Common myeloid progenitor, CD34-positive (primary cell): ENCODE measurements at regions of chr17 and their contacts with region 1.

Region 1: DNA sequence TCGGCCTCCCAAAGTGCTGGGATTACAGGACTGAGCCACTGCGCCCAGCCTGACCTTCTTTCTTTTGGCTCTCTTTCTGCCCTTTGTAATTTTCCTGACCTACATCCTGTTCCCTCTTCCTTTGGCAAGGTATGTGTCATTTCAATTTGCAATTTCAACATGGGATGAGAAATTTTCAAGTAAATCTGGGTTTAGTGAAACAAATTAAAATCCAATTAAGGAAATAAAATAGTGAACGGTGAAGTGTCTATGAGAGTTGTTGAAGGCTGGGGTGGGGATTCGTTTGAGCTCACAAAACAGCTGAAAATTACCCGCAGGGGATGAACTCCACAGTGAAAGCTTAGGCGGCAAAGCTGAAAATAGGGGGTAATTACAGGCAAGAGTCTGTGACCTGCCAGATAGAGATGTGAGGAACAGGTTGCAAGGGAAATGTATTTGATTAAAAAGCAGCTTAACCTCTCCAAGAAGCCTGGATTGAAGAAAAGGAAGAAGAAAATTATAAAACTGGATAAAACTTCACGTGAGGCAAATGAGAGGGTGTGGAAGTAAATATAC is 277.7 kb downstream of the UTP18 start:
- DNase-seq: no peak
- H3K4me3 ChIP-seq: no peak overlapping the region
- H3K27ac ChIP-seq: no peak overlapping the region
- H3K4me1 ChIP-seq: no peaks in the 10 kb centered on the region
- H3K27me3 ChIP-seq: peaks cover 0 to 2% (median 0%) of the 10 kb centered on the region in 5 experiments

Region 2: DNA sequence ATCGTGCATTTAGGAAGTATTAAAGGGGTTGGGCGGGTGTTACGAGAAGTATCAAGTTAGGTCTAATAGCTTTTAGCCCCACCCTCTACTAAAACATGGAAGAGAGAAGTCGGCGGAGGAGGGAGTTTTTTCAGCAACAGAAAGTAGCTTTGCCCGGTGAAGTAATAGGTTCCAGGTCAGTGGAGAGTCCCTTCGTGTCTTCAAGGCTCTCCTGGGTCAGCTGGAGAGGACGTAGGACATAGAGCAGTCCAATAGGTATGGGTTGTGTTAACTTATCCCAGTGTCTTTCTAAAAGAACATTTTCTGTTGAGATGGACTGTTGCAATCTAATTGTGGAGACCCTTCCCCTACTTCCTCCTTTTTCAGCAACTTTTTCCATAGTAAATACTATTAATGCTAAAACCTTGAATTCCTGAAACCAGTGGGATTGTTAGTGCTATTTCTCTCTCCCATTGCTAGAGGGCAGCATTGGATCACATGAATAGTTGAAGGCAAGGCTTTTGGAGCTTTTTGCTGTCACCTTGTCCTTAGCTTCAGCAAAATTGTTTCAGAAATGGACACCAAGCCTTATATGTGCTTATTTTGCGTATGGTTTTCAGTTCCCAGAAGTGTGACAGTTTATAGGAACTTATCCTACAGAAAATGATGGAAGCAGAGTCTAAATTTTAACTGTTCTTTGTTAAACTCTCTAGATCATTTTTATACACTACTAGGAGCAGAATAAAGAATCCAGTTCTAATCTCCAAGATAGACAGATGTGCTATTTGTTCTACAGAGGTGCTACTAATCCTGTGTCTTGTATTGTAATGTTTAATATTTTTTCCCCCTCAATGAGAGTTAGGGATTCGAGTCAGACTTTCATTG is 239.3 kb before region 1 on chr17:
- CTCF ChIA-PET with region 1: interaction called, 49 read pairs
- POLR2A ChIA-PET with region 1: no interaction called
- DNase-seq: peak; percentile 28 to 60 (median 57)
- H3K4me3 ChIP-seq: no peak overlapping the region
- H3K27ac ChIP-seq: no peak overlapping the region
- H3K4me1 ChIP-seq: no peaks in the 10 kb centered on the region
- H3K27me3 ChIP-seq: no peaks in the 10 kb centered on the region

Region 3: GRCh38 chr17:51371732-51372151 is 166.3 kb before region 1 on chr17:
- CTCF ChIA-PET with region 1: interaction called, 22 read pairs
- POLR2A ChIA-PET with region 1: interaction called, 3 read pairs
- DNase-seq: peak; percentile 49 to 68 (median 63)
- H3K4me3 ChIP-seq: peak overlapping the region in 1 of 7 experiments; percentile 49
- H3K27ac ChIP-seq: no peak overlapping the region
- H3K4me1 ChIP-seq: peaks cover 0 to 5% (median 0%) of the 10 kb centered on the region in 4 experiments
- H3K27me3 ChIP-seq: peaks cover 0 to 5% (median 0%) of the 10 kb centered on the region in 5 experiments